Activated naive CD4-positive, alpha-beta T cell treated with anti-CD3 and anti-CD28 coated beads, Interleukin-2, amount 10 ng/mL, durations not matched to agents 7 days and 5 days (primary cell): ENCODE measurements at regions of chr6 and their contacts with region 1.

Region 1: GRCh38 chr6:132483779-132484679 is 28.9 kb downstream of the STX7 start:
- DNase-seq: peak; percentile 52
- H3K4me3 Mint-ChIP-seq: no peak overlapping the region
- H3K27ac Mint-ChIP-seq: no peak overlapping the region
- H3K4me1 Mint-ChIP-seq: peaks cover 9% of the 10 kb centered on the region
- H3K27me3 Mint-ChIP-seq: no peaks in the 10 kb centered on the region

Region 2: GRCh38 chr6:132300323-132300949 is 183.6 kb before region 1 on chr6:
- CTCF ChIA-PET with region 1: interaction called, 17 read pairs
- DNase-seq: peak; percentile 25
- H3K4me3 Mint-ChIP-seq: no peak overlapping the region
- H3K27ac Mint-ChIP-seq: no peak overlapping the region
- H3K4me1 Mint-ChIP-seq: no peaks in the 10 kb centered on the region
- H3K27me3 Mint-ChIP-seq: peaks cover 8% of the 10 kb centered on the region

Region 3: DNA sequence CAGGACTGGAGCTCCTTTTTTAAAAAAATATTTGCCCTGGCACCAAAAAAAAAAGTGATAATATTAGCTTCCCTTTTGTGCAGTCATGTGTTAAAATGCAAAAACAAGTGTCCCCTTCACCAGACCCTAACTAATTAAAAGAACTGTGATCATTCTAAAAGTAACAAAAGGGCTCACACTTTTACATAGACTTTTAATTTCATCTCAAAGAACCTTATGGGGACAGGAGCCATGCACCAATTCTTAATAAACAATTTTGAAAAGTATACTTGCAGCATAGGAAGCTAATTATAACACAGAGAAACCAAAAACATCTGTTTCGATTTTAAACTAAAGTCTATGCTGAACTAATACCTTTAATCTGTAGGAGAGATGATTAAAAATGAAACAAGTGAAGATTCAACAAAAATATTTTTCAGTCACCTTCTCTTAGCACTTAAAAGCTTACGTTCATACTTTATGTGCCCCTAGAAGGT is 11.6 kb after region 1 on chr6:
- CTCF ChIA-PET with region 1: interaction called, 11 read pairs
- DNase-seq: no peak
- H3K4me3 Mint-ChIP-seq: no peak overlapping the region
- H3K27ac Mint-ChIP-seq: peak overlapping the region; percentile 4
- H3K4me1 Mint-ChIP-seq: peaks cover 26% of the 10 kb centered on the region
- H3K27me3 Mint-ChIP-seq: no peaks in the 10 kb centered on the region

Region 4: DNA sequence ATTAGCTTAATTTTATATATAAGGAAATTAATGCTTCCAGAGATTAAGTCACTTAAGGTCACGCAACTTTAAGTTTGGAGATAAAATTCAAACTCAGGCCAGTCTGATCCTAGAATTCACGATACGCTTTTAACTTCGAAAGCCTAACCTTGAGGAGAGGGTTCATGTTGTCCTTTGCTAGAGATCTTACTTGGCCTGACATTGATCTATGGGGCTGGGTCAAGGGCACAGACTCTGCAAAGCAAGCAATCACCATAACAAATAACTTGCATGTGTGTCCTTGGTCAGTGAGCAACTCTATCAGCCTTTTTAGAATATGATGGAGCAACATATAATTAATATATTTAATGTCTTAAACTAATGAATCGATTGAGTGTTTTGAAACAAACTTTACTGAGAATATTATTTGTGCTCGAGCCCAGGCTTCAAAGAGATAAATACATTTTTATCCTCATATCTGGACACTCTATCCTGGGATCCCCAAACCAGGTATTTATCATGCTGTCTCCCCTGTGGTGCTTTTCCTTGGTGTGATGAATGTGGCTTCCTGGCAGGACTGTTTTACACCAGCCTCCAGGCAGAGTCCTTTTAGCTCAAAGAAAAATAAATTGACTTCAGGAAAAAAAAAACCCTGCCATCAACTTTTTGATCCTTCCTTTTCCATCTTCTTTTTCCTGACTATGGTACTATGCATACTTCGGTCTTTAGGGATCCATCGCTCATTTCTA is 359.5 kb after region 1 on chr6:
- CTCF ChIA-PET with region 1: no interaction called
- DNase-seq: no peak
- H3K4me3 Mint-ChIP-seq: no peak overlapping the region
- H3K27ac Mint-ChIP-seq: no peak overlapping the region
- H3K4me1 Mint-ChIP-seq: no peaks in the 10 kb centered on the region
- H3K27me3 Mint-ChIP-seq: no peaks in the 10 kb centered on the region